ENCODE measurements at regions of chr1 and their contacts with region 1.

Region 1: GRCh38 chr1:202716654-202717053 is 6.4 kb upstream of the SYT2 start:
- DNase-seq: no peak
- ATAC-seq: no peak
- H3K4me3 ChIP-seq: no peak overlapping the region
- H3K4me3 Mint-ChIP-seq: no peak overlapping the region
- H3K27ac ChIP-seq: no peak overlapping the region
- H3K27ac Mint-ChIP-seq: no peak overlapping the region
- H3K4me1 ChIP-seq: peaks cover 0 to 5% of the 10 kb centered on the region in 2 experiments
- H3K4me1 Mint-ChIP-seq: peaks cover 0 to 2% (median 2%) of the 10 kb centered on the region in 3 donors
- H3K27me3 ChIP-seq: peaks cover 4 to 17% of the 10 kb centered on the region in 2 experiments
- H3K27me3 Mint-ChIP-seq: peaks cover 17 to 19% of the 10 kb centered on the region in 2 donors

Region 2: DNA sequence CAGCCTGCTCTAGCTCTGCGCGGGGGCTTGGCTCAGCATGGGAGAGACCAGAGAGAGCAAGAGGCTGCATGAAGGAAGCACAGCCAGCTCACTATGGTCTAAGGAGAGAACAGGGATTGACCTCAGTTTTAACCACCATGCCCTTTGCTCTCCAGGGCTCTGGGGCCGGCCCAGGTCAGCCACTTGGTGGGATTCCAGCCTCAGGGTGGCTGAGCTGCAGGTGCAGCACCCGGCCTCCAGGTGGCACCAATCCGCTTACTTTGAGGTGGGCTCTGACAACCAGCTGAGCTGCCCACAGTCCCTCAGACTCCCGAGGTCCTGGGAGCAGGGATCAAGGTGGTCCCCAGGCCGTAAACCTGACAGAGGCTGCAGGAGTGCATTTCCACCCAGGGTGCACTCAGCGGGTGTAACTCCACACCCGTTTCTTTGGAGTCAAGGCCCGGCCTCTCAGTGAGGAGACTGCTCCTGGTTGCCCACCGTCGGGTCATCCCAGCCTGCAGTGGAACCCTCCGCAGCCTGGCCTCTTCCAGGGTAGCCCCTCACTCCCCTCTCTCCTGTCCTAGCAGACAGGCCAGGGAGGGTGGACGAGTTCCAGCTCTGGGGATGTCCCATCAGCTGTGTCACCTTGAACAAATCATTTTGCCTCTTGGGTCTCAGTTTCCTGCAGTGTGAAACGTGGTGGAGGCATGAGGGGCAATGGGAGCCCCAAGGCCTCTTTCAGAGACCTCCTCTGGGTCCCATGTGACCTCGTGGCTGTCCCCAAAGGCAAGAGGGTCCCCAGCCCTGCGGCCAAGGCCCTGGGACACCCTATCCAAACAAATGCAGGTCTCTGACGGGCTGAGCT is 523.7 kb before region 1 on chr1:
- CTCF ChIA-PET with region 1: interaction called, 7 to 17 read pairs
- POLR2A ChIA-PET with region 1: no interaction called
- DNase-seq: peak in 31 of 35 experiments; percentile 13 to 74 (median 44)
- ATAC-seq: peak; percentile 41 to 62 (median 50)
- H3K4me3 ChIP-seq: no peak overlapping the region
- H3K4me3 Mint-ChIP-seq: no peak overlapping the region
- H3K27ac ChIP-seq: no peak overlapping the region
- H3K27ac Mint-ChIP-seq: no peak overlapping the region
- H3K4me1 ChIP-seq: peaks cover 0 to 38% of the 10 kb centered on the region in 2 experiments
- H3K4me1 Mint-ChIP-seq: peaks cover under 1 to 12% (median 4%) of the 10 kb centered on the region in 3 donors
- H3K27me3 ChIP-seq: peaks cover 0 to 39% of the 10 kb centered on the region in 2 experiments
- H3K27me3 Mint-ChIP-seq: peaks cover 21 to 32% of the 10 kb centered on the region in 2 donors

Region 3: GRCh38 chr1:202343652-202344349 is 372.9 kb before region 1 on chr1:
- CTCF ChIA-PET with region 1: interaction called, 3 to 15 read pairs
- POLR2A ChIA-PET with region 1: no interaction called
- DNase-seq: peak in 2 of 35 experiments; percentile 12 to 68
- ATAC-seq: no peak
- H3K4me3 ChIP-seq: no peak overlapping the region
- H3K4me3 Mint-ChIP-seq: peak overlapping the region; percentile 2 to 60 (median 42)
- H3K27ac ChIP-seq: no peak overlapping the region
- H3K27ac Mint-ChIP-seq: peak overlapping the region in 1 of 2 donors; percentile 54
- H3K4me1 ChIP-seq: peaks cover 5 to 6% of the 10 kb centered on the region in 2 experiments
- H3K4me1 Mint-ChIP-seq: peaks cover 29 to 36% (median 31%) of the 10 kb centered on the region in 3 donors
- H3K27me3 ChIP-seq: no peaks in the 10 kb centered on the region
- H3K27me3 Mint-ChIP-seq: no peaks in the 10 kb centered on the region

Region 4: DNA sequence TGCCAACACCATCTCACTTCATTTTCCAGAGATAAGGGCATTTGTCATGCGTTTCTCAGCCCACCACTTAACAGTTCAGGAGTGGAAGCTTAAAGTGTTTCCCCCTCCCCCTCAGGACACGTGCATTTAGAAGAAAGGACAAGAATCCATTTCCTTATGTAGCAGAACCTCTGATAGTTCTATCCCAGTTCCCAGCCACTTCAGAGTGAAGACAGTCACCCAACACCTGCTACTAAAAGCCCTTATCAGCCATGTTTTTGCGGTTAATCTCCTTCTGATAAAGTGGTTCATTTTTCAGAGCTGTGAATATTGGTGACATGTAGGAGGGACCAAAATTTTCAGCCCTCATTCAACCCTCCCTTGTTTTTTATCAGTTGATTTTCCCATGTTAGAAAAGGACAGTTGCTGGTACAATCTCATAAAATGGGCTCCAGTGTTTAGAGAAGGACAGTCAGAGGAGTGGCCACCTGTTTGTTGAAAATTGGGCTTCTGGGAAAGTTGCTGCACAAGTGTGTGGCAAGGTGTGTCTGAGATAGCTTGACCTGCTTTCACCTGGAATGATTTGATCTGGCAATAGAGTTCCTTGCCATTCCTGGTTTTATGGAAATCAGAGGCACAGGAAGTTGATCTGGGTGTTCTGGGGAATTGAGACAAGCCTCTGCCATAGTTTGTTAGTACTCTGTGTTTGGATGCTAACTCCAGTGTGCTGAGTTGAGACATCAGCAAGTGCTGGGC is 254.1 kb before region 1 on chr1:
- CTCF ChIA-PET with region 1: interaction called, 3 to 50 read pairs
- POLR2A ChIA-PET with region 1: no interaction called
- DNase-seq: no peak
- ATAC-seq: no peak
- H3K4me3 ChIP-seq: no peak overlapping the region
- H3K4me3 Mint-ChIP-seq: no peak overlapping the region
- H3K27ac ChIP-seq: no peak overlapping the region
- H3K27ac Mint-ChIP-seq: no peak overlapping the region
- H3K4me1 ChIP-seq: no peaks in the 10 kb centered on the region
- H3K4me1 Mint-ChIP-seq: peaks cover 0 to 4% (median 0%) of the 10 kb centered on the region in 3 donors
- H3K27me3 ChIP-seq: no peaks in the 10 kb centered on the region
- H3K27me3 Mint-ChIP-seq: no peaks in the 10 kb centered on the region

Region 5: DNA sequence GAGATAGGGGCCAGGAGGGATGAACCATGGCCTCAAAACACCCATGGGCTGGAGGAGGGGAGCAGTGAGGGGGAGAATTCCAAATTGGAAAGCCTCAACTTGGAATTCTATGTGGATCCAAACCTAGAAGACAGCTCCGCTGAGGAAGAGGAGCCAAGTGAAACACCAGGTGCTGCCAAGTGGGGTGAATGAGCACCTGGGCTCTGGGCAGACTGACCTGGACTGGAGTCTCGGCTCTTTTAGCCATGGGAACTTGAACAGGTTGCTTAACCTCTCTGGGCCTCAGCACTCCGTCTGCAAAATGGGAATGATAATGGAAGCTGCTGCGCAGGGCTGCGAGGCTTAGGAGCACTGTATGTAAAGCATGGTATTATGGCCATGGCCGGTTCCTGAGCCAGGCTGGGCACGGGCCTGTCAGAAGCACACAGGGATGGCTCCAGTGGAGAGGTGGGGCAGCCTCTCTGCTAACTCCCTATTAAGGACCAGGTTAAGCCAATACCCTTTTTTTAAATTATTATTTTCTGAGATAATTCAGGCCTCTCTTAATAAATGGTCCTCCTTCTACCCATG is 87.9 kb before region 1 on chr1:
- CTCF ChIA-PET with region 1: no interaction called
- POLR2A ChIA-PET with region 1: no interaction called
- DNase-seq: peak in 1 of 35 experiments; percentile 9
- ATAC-seq: peak in 2 of 4 experiments; percentile 3 to 7
- H3K4me3 ChIP-seq: no peak overlapping the region
- H3K4me3 Mint-ChIP-seq: peak overlapping the region; percentile 55 to 67 (median 58)
- H3K27ac ChIP-seq: peak overlapping the region; percentile 38
- H3K27ac Mint-ChIP-seq: peak overlapping the region; percentile 66 to 80
- H3K4me1 ChIP-seq: peaks cover 6 to 73% of the 10 kb centered on the region in 2 experiments
- H3K4me1 Mint-ChIP-seq: peaks cover 43 to 56% (median 52%) of the 10 kb centered on the region in 3 donors
- H3K27me3 ChIP-seq: peaks cover 0 to 63% of the 10 kb centered on the region in 2 experiments
- H3K27me3 Mint-ChIP-seq: peaks cover 5 to 27% of the 10 kb centered on the region in 2 donors

Region 6: DNA sequence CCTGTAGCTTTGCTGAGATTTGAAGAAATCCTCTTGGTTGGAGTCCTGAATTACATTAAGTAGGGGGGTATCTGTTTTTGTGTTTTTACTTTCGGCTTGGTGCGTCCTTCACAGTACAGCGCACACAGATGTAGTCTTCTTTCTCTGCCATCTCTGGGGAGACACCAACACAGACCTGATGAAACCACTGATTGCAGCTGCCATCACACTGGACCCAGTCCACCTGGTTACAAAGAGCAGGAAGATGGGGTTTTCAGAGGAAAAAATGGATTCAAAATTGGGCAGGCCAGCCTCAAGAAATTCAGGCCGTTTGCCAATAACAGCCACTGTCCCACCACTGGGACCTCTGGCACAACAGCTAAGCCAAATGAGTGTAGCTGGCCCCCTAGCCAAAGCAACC is 12.3 kb after region 1 on chr1:
- CTCF ChIA-PET with region 1: interaction called in 1 of 2 experiments, 13 read pairs
- POLR2A ChIA-PET with region 1: no interaction called
- DNase-seq: no peak
- ATAC-seq: no peak
- H3K4me3 ChIP-seq: no peak overlapping the region
- H3K4me3 Mint-ChIP-seq: no peak overlapping the region
- H3K27ac ChIP-seq: no peak overlapping the region
- H3K27ac Mint-ChIP-seq: no peak overlapping the region
- H3K4me1 ChIP-seq: no peaks in the 10 kb centered on the region
- H3K4me1 Mint-ChIP-seq: no peaks in the 10 kb centered on the region
- H3K27me3 ChIP-seq: no peaks in the 10 kb centered on the region
- H3K27me3 Mint-ChIP-seq: no peaks in the 10 kb centered on the region